ENCODE measurements at regions of chr9 and their contacts with region 1.

Region 1: DNA sequence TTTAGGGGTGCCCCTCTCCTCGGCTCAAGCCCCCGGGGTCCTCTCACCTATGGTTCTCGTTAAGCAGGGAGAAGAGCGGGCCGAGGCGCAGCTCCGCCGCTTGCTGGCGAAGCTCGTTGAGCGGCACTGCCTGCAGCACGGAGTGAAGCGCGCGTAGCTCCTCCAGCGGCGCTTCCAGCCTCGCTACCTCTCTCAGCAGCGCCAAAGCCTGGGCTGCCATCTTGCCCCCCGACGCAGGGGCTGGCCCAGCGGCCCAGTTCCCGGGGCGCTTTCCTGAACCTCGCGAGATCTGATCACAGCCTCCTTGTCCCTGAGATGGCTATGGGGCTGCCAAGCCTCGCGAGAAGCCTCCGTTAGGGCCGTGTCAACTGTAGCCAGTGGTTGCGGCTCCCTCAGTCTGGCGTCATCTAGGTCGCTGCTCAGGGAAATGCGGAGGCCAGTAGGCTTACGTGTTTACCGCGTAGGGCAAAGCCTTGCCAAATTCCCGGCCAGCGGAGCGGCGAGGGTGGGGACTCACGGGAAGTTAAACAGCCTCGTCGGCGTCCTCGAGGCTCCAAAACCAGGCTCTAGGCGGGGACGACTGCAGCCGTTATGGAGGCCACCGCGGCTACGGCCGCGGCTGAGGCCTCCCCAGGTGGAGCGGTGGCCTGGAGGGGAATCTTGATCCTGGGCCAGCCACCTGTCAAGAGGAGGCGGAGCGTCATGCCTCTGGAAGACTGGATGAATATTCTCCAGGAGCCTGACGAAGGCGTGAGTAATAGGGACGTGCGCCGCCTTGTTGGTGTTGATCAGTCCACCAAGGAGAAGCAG is at the start of gene PSMD5:
- DNase-seq: peak; percentile 98
- H3K4me3 Mint-ChIP-seq: peak within 1 kb of the TSS; percentile 98
- H3K27ac Mint-ChIP-seq: peak within 1 kb of the TSS; percentile 94
- H3K4me1 Mint-ChIP-seq: peaks cover 66% of the 10 kb centered on the region
- H3K27me3 Mint-ChIP-seq: no peaks in the 10 kb centered on the region
- total RNA-seq, gene PSMD5: 61.8 and 67.9 TPM in 2 replicates

Region 2: GRCh38 chr9:120792898-120793765 is 49.8 kb before region 1 on chr9 and contains the start of gene FBXW2:
- intact Hi-C with region 1: loop called (anchors 1 kb)
- DNase-seq: peak; percentile 86
- H3K4me3 Mint-ChIP-seq: peak within 1 kb of the TSS; percentile 87
- H3K27ac Mint-ChIP-seq: peak within 1 kb of the TSS; percentile 91
- H3K4me1 Mint-ChIP-seq: peaks cover 40% of the 10 kb centered on the region
- H3K27me3 Mint-ChIP-seq: no peaks in the 10 kb centered on the region
- total RNA-seq, gene FBXW2: 79.7 and 80.2 TPM in 2 replicates

Region 3: DNA sequence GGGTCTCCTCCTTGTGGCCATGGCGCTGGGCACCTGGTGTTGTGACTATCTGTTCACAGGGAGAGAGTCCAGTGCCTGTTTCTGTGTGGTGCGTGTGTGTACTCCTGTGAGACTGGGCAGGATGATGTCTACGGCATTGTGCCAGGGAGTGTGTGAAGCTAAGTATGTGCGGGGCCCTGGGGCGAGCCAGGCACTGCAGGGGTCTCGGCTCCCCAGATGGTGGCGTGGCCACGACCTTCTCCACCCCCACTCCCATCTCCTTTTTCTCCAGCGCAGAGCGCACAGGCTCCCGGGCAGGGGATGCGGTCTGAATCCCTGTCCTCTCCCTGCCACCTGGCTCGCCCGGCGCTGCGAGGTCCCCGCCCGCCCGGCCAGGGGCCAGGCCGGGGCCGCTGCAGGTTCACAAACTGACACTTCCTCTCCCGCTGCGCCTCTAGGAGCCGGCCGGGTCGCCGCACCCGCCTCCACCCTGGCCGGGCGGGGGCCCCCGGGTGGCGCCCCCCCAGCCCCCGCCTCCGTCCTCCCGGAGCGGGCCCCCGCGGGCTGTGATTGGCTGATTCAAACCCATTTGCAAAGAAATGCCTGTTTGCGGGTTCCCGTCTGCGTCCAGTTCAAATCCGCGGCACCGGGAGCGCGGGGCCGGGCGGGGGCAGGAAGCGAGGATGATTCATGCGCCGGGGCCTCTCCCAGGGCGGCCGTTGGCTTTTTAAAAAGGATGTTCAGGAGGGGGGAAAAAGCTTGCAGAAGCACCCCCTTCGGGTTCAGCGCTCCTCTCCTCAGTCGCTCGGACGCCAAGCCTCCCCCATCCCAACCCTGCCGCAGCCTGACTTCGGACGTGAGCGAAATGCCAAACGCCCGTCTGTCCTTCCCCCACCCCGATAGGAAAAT is 33.3 kb after region 1 on chr9:
- intact Hi-C with region 1: loop called (anchors 2 kb)
- DNase-seq: peak; percentile 90
- H3K4me3 Mint-ChIP-seq: peak overlapping the region; percentile 87
- H3K27ac Mint-ChIP-seq: peak overlapping the region; percentile 93
- H3K4me1 Mint-ChIP-seq: peaks cover 72% of the 10 kb centered on the region
- H3K27me3 Mint-ChIP-seq: no peaks in the 10 kb centered on the region

Region 4: GRCh38 chr9:120928483-120929228 is 85.8 kb after region 1 on chr9:
- intact Hi-C with region 1: loop called (anchors 2 kb)
- DNase-seq: peak; percentile 81
- H3K4me3 Mint-ChIP-seq: peak overlapping the region; percentile 92
- H3K27ac Mint-ChIP-seq: peak overlapping the region; percentile 98
- H3K4me1 Mint-ChIP-seq: peaks cover 67% of the 10 kb centered on the region
- H3K27me3 Mint-ChIP-seq: no peaks in the 10 kb centered on the region

Region 5: GRCh38 chr9:121074635-121075385 is 231.9 kb after region 1 on chr9 and contains the start of gene CNTRL:
- intact Hi-C with region 1: loop called (anchors 2 kb)
- DNase-seq: peak; percentile 90
- H3K4me3 Mint-ChIP-seq: peak within 1 kb of the TSS; percentile 100
- H3K27ac Mint-ChIP-seq: peak within 1 kb of the TSS; percentile 98
- H3K4me1 Mint-ChIP-seq: peaks cover 34% of the 10 kb centered on the region
- H3K27me3 Mint-ChIP-seq: no peaks in the 10 kb centered on the region
- total RNA-seq, gene CNTRL: 67.6 and 68.4 TPM in 2 replicates